HEK293 (cell line): ENCODE measurements at regions of chr12 and their contacts with region 1.

Region 1: DNA sequence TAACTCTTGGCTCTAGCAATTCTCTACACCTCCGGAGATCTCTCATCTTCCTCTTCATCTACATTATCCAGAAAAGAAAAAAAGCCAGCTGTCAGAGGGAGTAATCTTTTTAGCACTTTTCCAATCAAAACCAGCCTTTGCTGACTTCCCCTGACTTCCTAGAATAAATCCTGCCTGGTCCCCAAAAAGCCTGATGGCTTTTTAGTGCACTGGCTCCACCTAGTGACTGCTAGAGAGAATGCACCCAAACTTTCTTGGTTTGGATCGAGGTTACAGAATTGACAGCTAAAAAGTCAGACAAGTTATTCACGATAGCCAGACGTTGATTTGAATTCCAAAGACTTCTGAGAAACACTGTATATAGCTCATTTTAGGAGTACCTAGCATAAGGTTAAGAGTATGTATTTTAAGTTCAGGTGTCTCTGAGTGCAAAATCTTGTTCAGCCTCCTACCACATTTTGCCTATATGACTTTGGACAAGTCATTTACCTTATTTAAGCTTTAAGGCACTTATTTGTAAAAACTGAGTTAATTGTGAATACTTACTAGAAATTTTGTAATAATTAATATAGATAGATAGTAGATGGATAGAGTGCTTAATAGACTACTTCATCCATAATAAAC is 185.7 kb upstream of the GRIN2B start:
- H3K4me3 ChIP-seq: no peak overlapping the region
- H3K27ac ChIP-seq: no peak overlapping the region
- H3K4me1 ChIP-seq: no peaks in the 10 kb centered on the region
- CTCF ChIP-seq: peak; percentile 45; the same call in 1 of the 2 replicates

Region 2: DNA sequence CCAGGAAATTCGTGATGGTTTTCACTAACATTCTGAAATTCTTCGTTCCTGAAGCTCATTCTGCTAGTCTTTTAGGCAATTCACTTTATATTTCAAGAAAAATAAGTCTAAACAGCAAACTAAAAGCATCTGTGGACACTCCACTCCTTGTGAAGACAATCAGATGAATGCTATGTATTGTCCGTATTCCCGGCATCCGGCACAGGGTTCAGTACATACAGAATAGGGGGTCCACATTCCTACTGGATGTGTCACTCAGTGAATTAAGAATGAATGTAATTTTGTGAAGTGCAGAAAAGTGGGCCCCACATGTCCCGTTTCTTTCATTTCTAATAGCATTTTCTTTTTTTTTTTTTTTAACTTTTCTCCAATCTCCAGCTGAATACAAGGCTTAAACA is 427.0 kb before region 1 on chr12:
- CTCF ChIA-PET with region 1: interaction called, 18 read pairs
- POLR2A ChIA-PET with region 1: no interaction called
- H3K4me3 ChIP-seq: no peak overlapping the region
- H3K27ac ChIP-seq: no peak overlapping the region
- H3K4me1 ChIP-seq: peaks cover 2% of the 10 kb centered on the region; the same call in 1 of the 2 replicates
- CTCF ChIP-seq: no peak

Region 3: GRCh38 chr12:13864081-13864673 is 302.9 kb before region 1 on chr12:
- CTCF ChIA-PET with region 1: interaction called, 13 read pairs
- POLR2A ChIA-PET with region 1: no interaction called
- H3K4me3 ChIP-seq: no peak overlapping the region
- H3K27ac ChIP-seq: no peak overlapping the region
- H3K4me1 ChIP-seq: no peaks in the 10 kb centered on the region
- CTCF ChIP-seq: peak; percentile 64

Region 4: DNA sequence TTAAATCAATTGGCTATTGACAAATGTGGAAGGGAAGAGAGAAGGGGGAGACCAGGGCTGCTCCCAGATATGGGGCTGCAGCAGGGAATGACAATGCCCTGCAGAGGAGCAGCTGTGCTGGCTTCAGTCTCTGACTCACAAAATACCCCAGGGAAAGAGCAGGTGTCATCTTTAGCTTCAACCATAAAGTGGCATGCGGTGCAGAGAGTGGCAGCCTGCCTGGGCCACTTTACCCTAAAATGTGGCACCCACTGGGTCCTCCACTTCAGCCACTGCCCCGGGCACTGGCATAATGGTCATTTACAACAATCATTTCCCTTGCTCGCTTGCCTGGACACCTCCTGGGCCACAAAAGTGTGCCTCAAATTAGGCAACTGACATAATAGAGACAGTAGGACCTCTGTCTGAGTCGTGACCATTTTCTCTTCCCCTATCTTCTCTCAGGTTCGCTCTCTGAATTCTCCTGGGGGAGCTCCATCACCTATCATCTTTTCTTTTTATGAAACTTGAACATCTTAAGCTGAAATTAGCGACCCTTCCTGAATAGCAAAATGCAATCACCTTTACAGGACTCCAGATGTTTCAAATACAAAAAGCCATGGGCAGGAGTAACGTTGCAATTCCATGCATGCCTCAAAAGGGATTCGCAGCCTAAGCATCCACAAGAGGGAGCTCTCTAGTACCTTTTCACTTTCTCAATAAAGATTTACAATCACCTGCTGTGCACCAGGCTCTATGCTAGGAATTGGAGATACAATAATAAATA is 18.5 kb after region 1 on chr12:
- CTCF ChIA-PET with region 1: interaction called, 16 read pairs
- POLR2A ChIA-PET with region 1: no interaction called
- H3K4me3 ChIP-seq: no peak overlapping the region
- H3K27ac ChIP-seq: no peak overlapping the region
- H3K4me1 ChIP-seq: no peaks in the 10 kb centered on the region
- CTCF ChIP-seq: peak; percentile 43; the same call in 1 of the 2 replicates